Stomach (tissue), 19 donors: ENCODE measurements at regions of chr22 and their contacts with region 1.

Region 1: GRCh38 chr22:44505796-44506354 is 7.8 kb upstream of the RTL6 start:
- DNase-seq: no peak
- H3K4me3 ChIP-seq: no peak overlapping the region
- H3K27ac ChIP-seq: no peak overlapping the region
- H3K4me1 ChIP-seq: no peaks in the 10 kb centered on the region
- H3K27me3 ChIP-seq: peaks cover 0 to 20% (median 0%) of the 10 kb centered on the region in 3 donors
- CTCF ChIP-seq: no peak
- EP300 ChIP-seq: no peak
- POLR2A ChIP-seq: no peak

Region 2: DNA sequence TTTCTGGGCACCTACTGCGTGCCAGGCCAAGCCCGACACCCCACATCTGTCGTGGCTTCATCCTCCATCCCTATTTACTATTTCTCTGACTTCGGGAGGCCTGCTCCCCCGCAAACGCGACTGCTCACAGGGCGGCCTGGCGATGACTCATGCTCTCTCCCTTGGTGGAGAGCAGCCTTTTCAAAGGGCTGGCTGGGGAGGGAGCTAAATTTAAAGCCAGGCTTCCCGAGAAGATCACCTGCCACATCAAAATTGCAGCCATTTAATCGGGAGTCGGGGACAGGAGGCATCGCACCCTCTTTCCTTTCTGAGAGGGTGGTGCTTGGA is 168.2 kb before region 1 on chr22:
- intact Hi-C with region 1: loop called (anchors 10 kb)
- DNase-seq: peak; percentile 32 to 69
- H3K4me3 ChIP-seq: no peak overlapping the region
- H3K27ac ChIP-seq: peak overlapping the region in 1 of 5 donors; percentile 43
- H3K4me1 ChIP-seq: peaks cover 32 to 50% (median 46%) of the 10 kb centered on the region in 4 donors
- H3K27me3 ChIP-seq: peaks cover 0 to 12% (median 4%) of the 10 kb centered on the region in 3 donors
- CTCF ChIP-seq: no peak
- EP300 ChIP-seq: no peak
- POLR2A ChIP-seq: no peak

Region 3: DNA sequence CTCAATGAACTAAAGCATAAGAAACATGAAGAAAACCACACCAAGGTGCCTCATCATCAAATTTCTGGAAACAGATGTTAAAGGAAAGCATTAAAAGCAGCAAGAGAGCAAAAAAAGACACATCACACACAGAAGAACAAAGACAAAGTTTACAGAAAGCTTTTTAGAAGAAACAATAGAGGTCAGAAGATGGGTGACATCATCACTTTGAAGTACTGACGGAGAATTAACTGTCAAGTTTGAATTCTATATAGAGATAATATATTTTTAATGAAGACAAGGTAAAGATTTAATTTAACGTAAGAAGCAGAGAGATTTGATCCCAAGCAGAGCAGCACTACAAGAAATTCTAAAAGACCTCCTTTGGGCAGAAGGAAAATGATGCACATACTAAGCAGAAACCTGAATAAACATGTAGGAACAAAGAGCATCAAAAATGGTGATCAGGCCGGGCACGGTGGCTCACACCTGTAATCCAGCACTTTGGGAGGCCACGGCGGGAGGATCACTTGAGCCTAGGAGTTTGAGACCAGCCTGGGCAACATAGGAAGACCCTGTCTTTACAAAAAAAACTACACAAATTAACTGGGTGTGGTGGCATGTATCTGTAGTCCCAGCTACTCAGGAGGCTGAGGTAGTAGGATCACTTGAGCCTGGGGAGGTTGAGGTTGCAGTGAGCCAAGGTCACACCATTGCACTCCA is 55.4 kb after region 1 on chr22:
- intact Hi-C with region 1: no loop called
- DNase-seq: no peak
- H3K4me3 ChIP-seq: no peak overlapping the region
- H3K27ac ChIP-seq: no peak overlapping the region
- H3K4me1 ChIP-seq: no peaks in the 10 kb centered on the region
- H3K27me3 ChIP-seq: peaks cover 0 to 18% (median 0%) of the 10 kb centered on the region in 3 donors
- CTCF ChIP-seq: no peak
- EP300 ChIP-seq: no peak
- POLR2A ChIP-seq: no peak